GM13976 (cell line): ENCODE measurements at regions of chr2 and their contacts with region 1.

Region 1: DNA sequence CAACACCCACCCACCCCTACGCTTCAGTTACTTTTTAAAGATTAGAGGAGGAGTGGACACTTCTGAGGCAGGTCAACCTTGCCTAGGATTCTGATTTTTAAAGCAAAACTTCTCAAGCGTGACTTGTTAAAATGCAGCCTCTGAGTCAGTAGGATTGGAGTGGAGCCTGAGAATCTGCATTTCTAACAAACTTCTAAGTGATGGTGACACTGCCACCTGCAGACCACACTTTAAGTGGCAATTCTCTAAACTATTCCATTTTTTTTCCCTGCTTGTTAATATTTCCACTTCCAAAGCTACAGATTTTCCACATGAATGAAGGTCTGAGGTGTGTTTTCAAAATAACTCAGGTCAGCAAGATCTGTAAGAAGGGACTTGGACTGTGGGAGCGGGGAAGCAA is 171.1 kb upstream of the CCDC150 start:
- DNase-seq: no peak
- CTCF ChIP-seq: no peak

Region 2: DNA sequence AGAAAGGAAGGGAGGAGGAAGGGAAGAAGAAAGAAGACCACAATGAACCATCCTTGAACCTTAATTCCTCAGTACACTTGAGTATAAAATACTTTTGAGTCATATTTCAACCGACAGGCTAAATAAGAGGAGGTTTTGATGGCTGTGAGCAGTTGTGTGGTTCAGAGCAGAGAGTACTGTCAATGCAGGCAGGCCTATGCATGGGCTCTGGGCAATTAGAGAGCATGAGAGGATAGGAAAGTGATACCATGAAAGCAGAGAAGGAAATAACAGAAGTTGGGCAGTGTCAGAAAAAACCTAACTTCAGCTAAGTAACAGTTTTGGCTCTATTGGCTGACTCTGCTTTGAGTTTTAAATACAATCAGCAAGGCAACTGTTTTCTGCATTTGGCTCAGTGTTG is 173.4 kb before region 1 on chr2:
- in situ Hi-C with region 1: loop called (anchors 5 kb)
- DNase-seq: no peak
- CTCF ChIP-seq: no peak

Region 3: DNA sequence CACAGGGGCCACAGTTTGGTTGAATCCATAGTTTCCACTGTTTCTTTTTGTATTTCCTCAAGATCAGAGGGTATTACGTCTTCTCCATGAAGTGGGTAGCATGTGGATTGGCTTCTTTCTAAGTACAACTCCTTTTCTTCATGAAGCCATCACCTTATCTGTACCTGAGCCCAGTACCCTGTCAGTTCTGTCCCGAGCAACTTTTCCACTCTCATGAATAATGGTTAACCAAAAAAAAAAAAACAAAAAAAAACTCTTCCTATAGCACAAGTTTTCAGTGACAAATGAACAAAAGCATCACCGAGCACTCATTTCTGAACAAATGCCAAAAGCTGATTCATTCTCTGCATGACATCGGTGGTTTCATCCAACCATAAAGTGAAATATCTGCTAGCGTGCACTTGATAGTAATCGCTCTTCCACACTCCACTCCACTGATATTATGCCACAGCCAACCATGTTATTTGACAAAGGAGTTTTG is 118.2 kb after region 1 on chr2:
- in situ Hi-C with region 1: loop called (anchors 10 kb)
- DNase-seq: no peak
- CTCF ChIP-seq: no peak

Region 4: DNA sequence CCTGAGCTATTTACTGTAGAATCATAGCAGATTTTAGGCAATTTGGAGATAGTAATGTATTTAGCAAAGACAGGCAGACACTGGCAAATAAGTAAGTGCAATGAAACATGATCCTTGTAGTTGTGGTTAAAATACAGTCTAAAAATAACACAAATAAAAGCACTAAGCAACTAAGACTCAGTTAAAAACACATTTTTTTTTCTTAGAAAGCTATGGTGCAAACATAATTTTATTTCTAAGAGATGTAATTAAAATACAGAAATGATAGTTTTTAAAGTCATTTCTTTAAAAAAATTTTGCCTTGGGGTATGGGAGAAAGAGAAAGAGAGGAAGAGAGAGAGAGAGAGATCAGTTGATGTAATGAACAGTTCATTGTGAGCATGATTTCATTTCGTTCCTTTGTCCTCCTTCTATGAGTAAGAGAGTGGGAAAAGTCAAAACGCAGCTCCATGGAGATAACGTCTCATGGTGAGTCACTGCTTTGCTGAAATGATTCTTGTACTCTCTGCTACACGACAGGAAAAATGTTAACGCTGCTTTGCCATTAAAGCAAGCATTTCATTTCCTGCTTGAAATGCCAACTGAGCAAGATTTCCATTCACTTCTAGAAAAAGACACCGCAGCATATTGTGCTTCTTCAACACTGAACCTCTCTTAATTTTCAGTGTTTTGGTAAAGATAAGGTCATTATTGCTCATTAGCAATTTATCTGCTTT is 519.4 kb after region 1 on chr2:
- in situ Hi-C with region 1: no loop called
- DNase-seq: peak; percentile 23
- CTCF ChIP-seq: no peak